ENCODE measurements at regions of chr3 and their contacts with region 1.

Region 1: DNA sequence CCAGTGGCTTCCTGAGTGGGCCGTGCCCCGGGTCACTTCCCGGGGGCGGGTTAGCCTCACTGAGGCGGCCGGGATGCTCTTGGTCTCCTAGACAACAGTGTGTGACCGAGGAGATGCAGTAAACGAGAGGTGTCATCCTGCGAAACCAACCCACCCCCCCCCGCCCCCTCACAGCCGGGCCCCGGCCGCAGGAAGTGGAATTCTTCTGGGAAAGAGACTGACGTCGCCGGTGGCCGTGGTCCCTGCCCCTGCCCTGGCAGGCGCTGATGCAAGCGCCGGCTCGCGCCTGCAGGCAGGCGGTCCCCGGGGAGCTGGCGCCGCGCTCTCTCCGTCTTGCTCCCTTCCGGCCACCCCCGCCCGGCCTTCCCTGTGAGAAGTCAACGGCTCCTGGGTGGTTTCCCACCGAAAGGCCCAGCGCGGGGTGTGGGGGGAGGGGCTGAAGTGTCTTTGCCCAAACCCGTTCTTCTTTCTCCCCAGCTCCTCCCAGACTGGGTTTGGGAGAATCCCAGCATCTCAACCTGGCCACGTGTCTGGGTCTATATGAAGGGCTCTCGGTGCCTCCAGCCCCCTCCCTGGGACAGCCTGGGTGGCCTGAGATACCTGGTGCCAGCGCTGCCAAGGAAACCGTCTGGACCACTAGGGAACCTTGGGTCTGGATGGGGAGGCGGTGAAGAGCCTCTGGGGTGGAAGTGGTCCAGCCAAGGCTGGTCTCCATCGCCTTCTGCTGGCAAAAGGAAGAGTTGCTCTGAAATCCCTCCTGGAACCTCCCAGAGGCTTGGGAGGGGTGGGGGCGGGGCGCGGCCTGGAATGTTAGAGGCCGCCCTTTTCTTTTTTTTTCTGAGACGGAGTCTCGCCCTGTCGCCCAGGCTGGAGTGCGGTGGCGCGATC is 47.3 kb downstream of the BHLHE40 start:
- DNase-seq: peak; percentile 88
- ATAC-seq: peak; percentile 37
- H3K4me3 Mint-ChIP-seq: peak overlapping the region; percentile 69
- H3K27ac Mint-ChIP-seq: peak overlapping the region; percentile 84
- H3K4me1 Mint-ChIP-seq: peaks cover 58% of the 10 kb centered on the region
- H3K27me3 Mint-ChIP-seq: peaks cover 6% of the 10 kb centered on the region

Region 2: GRCh38 chr3:4615750-4616149 is 410.8 kb before region 1 on chr3:
- CTCF ChIA-PET with region 1: no interaction called
- POLR2A ChIA-PET with region 1: no interaction called
- intact Hi-C with region 1: no loop called
- DNase-seq: no peak
- ATAC-seq: no peak
- H3K4me3 Mint-ChIP-seq: no peak overlapping the region
- H3K27ac Mint-ChIP-seq: no peak overlapping the region
- H3K4me1 Mint-ChIP-seq: peaks cover 2% of the 10 kb centered on the region
- H3K27me3 Mint-ChIP-seq: no peaks in the 10 kb centered on the region

Region 3: DNA sequence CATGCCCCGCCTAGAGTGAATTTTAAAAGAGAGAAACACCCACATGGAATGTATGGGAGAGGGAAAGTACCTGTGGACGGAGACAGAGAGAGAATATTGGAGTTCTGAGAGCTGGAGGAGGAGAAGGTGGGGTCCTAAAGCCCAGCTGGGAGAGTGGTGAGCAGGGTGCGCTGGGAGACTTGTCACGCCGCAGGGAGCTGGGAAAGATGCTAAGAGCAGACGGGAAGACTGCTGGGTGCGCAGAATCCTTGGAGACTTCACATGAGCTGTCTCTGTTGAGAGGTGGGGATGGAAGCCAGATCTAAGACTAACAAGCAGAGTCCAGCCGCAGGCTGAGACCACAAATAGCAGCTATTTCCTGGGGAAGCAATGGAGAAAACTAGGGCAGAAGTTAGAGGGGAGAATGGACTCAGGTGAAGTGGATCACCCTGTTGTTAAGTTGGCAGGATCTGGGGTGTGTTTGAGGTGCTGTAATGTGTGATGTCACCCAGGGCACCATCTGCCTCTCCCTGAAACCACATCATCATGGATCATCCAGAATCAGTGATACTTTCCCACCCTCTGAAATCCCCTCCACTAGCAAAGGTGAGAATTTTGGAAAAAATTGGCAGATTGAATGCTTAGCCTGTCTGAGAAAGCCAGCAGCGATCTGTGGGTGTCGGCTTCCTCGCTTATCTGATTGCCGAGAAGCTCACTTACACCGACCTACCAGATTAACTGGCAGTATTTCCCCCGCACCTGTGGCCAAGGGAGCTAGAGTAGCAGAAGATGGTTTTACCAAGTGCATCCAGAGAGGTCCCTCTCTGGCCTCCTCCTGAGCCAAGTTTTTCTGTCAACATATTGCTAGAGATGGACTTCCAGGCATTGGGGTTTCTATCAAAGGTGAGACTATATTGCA is 222.2 kb before region 1 on chr3:
- CTCF ChIA-PET with region 1: no interaction called
- POLR2A ChIA-PET with region 1: no interaction called
- intact Hi-C with region 1: loop called in 1 of 2 experiments (anchors 1 kb)
- DNase-seq: peak; percentile 48
- ATAC-seq: no peak
- H3K4me3 Mint-ChIP-seq: peak overlapping the region; percentile 4
- H3K27ac Mint-ChIP-seq: peak overlapping the region; percentile 73
- H3K4me1 Mint-ChIP-seq: peaks cover 39% of the 10 kb centered on the region
- H3K27me3 Mint-ChIP-seq: no peaks in the 10 kb centered on the region

Region 4: GRCh38 chr3:4888913-4889846 is 137.4 kb before region 1 on chr3:
- CTCF ChIA-PET with region 1: interaction called, 4 read pairs
- POLR2A ChIA-PET with region 1: no interaction called
- intact Hi-C with region 1: loop called in 1 of 2 experiments (anchors 5 kb)
- DNase-seq: peak; percentile 50
- ATAC-seq: peak; percentile 90
- H3K4me3 Mint-ChIP-seq: peak overlapping the region; percentile 5
- H3K27ac Mint-ChIP-seq: peak overlapping the region; percentile 83
- H3K4me1 Mint-ChIP-seq: peaks cover 37% of the 10 kb centered on the region
- H3K27me3 Mint-ChIP-seq: peaks cover 2% of the 10 kb centered on the region

Region 5: GRCh38 chr3:5006755-5007202 is 19.8 kb before region 1 on chr3:
- CTCF ChIA-PET with region 1: interaction called, 8 read pairs
- POLR2A ChIA-PET with region 1: interaction called, 6 read pairs
- intact Hi-C with region 1: loop called (anchors 1 kb)
- DNase-seq: peak; percentile 90
- ATAC-seq: peak; percentile 94
- H3K4me3 Mint-ChIP-seq: peak overlapping the region; percentile 37
- H3K27ac Mint-ChIP-seq: peak overlapping the region; percentile 90
- H3K4me1 Mint-ChIP-seq: peaks cover 49% of the 10 kb centered on the region
- H3K27me3 Mint-ChIP-seq: peaks cover 6% of the 10 kb centered on the region

Region 6: GRCh38 chr3:5122030-5122740 is 95.6 kb after region 1 on chr3 and contains the start of gene ARL8B:
- CTCF ChIA-PET with region 1: no interaction called
- POLR2A ChIA-PET with region 1: interaction called, 9 read pairs
- intact Hi-C with region 1: loop called in 1 of 2 experiments (anchors 2 kb)
- DNase-seq: peak; percentile 96
- ATAC-seq: peak; percentile 84
- H3K4me3 Mint-ChIP-seq: peak within 1 kb of the TSS; percentile 83
- H3K27ac Mint-ChIP-seq: peak within 1 kb of the TSS; percentile 94
- H3K4me1 Mint-ChIP-seq: peaks cover 42% of the 10 kb centered on the region
- H3K27me3 Mint-ChIP-seq: no peaks in the 10 kb centered on the region
- total RNA-seq, gene ARL8B: 44.7 to 45.1 TPM

Measured in activated CD4-positive, alpha-beta T cell treated with anti-CD3 and anti-CD28 coated beads for 36 hours (primary cell).